Activated T-helper 2 cell treated with anti-CD3 and anti-CD28 coated beads, Interferon-gamma antibody, Interleukin-2, Interleukin-4, amounts not matched to agents 10 μg/mL and 5 μg/mL and 100 μg/mL, durations not matched to agents 14 hours and 24 hours and 36 hours (primary cell): ENCODE measurements at regions of chr6 and their contacts with region 1.

Region 1: GRCh38 chr6:100001915-100002388 is 7.9 kb upstream of the MCHR2 start:
- DNase-seq: no peak
- H3K4me3 Mint-ChIP-seq: no peak overlapping the region
- H3K27ac Mint-ChIP-seq: no peak overlapping the region
- H3K4me1 Mint-ChIP-seq: no peaks in the 10 kb centered on the region
- H3K27me3 Mint-ChIP-seq: peaks cover 17% of the 10 kb centered on the region

Region 2: DNA sequence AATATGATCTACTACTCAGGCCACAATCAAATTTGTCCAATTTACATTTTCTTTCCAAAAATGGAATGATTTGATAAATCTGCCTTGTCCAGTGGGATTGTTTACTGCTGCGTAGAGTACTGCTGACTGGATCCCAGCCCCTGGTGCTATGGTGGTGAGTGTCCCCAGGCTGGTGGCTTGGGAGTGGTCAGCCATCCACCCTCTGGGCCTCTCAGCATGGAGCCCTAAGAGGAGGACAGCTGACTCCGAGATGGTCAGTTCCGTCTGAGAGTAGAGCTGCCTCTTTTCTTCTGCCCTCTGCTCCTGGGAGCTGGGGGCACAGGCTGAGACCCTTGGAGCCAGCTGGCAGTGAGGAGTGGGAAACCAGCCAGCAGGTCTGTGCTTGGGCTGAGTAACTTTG is 372.7 kb before region 1 on chr6:
- intact Hi-C with region 1: no loop called
- DNase-seq: no peak
- H3K4me3 Mint-ChIP-seq: no peak overlapping the region
- H3K27ac Mint-ChIP-seq: no peak overlapping the region
- H3K4me1 Mint-ChIP-seq: no peaks in the 10 kb centered on the region
- H3K27me3 Mint-ChIP-seq: peaks cover 32% of the 10 kb centered on the region

Region 3: GRCh38 chr6:100099189-100100074 is 97.5 kb after region 1 on chr6:
- intact Hi-C with region 1: loop called (anchors 1 kb)
- DNase-seq: no peak
- H3K4me3 Mint-ChIP-seq: no peak overlapping the region
- H3K27ac Mint-ChIP-seq: no peak overlapping the region
- H3K4me1 Mint-ChIP-seq: no peaks in the 10 kb centered on the region
- H3K27me3 Mint-ChIP-seq: peaks cover 16% of the 10 kb centered on the region